ENCODE measurements at regions of chr6 and their contacts with region 1.

Region 1: DNA sequence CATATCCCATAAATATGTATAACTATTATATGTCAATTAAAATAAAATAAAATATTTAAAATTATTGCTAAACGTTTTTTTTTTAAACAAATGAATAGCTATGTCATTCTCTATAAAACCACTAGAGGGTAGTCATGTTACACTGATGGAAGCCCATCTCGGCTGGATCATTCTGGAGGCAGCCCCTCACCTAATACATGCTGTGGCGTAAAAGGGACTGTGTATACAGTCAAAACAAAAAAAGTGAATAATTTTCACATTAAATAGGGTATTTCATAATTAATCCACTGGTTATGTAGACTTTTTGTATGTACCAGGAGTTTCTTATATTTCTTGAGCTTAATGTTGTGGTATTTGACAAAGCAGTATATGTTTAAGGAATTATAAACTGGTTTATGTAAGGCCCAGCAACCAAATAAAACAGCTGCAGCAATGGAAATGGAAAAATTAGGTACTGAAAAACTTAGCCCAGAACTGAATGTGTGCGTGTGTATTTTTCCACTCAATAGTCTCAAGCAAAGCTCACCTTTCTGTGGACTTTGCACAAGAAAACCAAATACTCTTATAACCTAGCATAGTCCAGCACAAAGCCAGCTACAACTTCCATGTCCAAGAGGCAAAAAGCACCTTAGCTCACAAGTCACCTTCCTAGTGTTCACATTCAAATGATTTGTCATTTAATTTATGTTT is 81.7 kb downstream of the COL9A1 start:
- DNase-seq: peak in 1 of 2 experiments; percentile 19
- H3K4me3 ChIP-seq: no peak overlapping the region
- H3K4me3 Mint-ChIP-seq: no peak overlapping the region
- H3K27ac Mint-ChIP-seq: no peak overlapping the region
- H3K4me1 ChIP-seq: no peaks in the 10 kb centered on the region
- H3K4me1 Mint-ChIP-seq: no peaks in the 10 kb centered on the region
- H3K27me3 ChIP-seq: no peaks in the 10 kb centered on the region
- H3K27me3 Mint-ChIP-seq: peaks cover 4% of the 10 kb centered on the region
- CTCF ChIP-seq: peak; percentile 60 to 74

Region 2: DNA sequence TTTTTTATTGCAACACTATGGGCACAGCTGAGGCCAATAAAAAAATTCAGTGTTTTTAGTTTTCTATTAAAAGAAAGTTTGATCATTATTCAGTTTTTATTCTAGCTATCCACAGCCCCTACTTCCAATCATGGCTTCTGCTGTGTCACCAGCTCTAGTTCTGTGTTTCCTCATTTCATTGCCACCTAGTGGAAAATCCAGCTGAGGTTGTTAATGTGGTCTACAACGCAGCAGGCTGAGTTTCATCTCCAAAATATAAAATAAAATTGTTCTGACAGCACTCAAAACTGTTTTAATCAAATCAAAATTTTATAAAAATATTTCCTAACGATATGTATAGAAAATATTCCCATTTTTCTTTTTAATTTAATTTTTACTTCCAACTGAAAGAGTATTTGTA is 68.1 kb after region 1 on chr6:
- CTCF ChIA-PET with region 1: interaction called, 24 read pairs
- POLR2A ChIA-PET with region 1: no interaction called
- intact Hi-C with region 1: loop called (anchors 1 kb)
- DNase-seq: no peak
- H3K4me3 ChIP-seq: no peak overlapping the region
- H3K4me3 Mint-ChIP-seq: no peak overlapping the region
- H3K27ac Mint-ChIP-seq: no peak overlapping the region
- H3K4me1 ChIP-seq: no peaks in the 10 kb centered on the region
- H3K4me1 Mint-ChIP-seq: no peaks in the 10 kb centered on the region
- H3K27me3 ChIP-seq: no peaks in the 10 kb centered on the region
- H3K27me3 Mint-ChIP-seq: peaks cover 2% of the 10 kb centered on the region
- CTCF ChIP-seq: peak; percentile 10 to 27

Region 3: GRCh38 chr6:70310063-70310694 is 89.0 kb after region 1 on chr6:
- CTCF ChIA-PET with region 1: interaction called, 11 read pairs
- POLR2A ChIA-PET with region 1: no interaction called
- intact Hi-C with region 1: loop called (anchors 1 kb)
- DNase-seq: peak in 1 of 2 experiments; percentile 39
- H3K4me3 ChIP-seq: no peak overlapping the region
- H3K4me3 Mint-ChIP-seq: no peak overlapping the region
- H3K27ac Mint-ChIP-seq: no peak overlapping the region
- H3K4me1 ChIP-seq: no peaks in the 10 kb centered on the region
- H3K4me1 Mint-ChIP-seq: peaks cover 6% of the 10 kb centered on the region
- H3K27me3 ChIP-seq: no peaks in the 10 kb centered on the region
- H3K27me3 Mint-ChIP-seq: peaks cover 13% of the 10 kb centered on the region
- CTCF ChIP-seq: peak; percentile 19 to 52

Region 4: DNA sequence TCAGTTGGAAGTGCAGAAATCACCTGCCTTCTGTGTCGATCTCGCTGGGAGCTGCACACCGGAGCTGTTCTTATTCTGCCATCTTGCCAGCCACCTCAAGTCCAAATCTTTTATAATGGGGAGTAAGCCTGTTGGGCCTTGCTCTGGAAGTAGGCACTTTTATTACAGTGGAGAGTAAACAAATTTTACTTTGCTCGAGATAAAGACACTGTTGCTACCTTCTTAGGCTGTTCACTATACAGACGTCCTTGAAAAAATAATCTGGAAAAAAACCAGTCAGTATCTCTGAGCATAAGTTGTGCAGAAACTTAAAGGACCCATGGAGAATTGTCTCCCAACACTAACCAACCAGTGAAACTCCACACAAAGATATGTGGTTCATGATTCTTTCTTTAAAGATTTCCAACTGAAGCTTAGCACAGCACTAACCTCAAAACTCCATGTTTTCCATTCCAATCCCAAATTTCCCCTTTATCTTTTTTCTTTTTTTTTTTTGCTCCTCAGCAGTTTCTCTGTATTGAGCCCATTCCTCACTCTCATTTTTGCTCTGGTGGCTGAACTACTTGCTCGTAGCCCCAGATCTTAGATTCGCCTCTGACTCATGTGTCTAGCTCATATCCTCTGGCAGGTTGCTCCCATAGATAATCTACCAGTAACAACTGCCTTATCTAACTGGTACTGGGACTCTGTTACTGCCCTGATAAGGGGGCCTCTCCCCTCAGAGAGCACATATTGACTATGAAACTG is 116.0 kb after region 1 on chr6:
- CTCF ChIA-PET with region 1: no interaction called
- POLR2A ChIA-PET with region 1: no interaction called
- intact Hi-C with region 1: no loop called
- DNase-seq: peak; percentile 3 to 43
- H3K4me3 ChIP-seq: no peak overlapping the region
- H3K4me3 Mint-ChIP-seq: peak overlapping the region; percentile 5
- H3K27ac Mint-ChIP-seq: peak overlapping the region; percentile 36
- H3K4me1 ChIP-seq: peaks cover 3% of the 10 kb centered on the region; the same call in 1 of the 2 replicates
- H3K4me1 Mint-ChIP-seq: peaks cover 7% of the 10 kb centered on the region
- H3K27me3 ChIP-seq: no peaks in the 10 kb centered on the region
- H3K27me3 Mint-ChIP-seq: peaks cover 11% of the 10 kb centered on the region
- CTCF ChIP-seq: no peak